ENCODE measurements at regions of chr3 and their contacts with region 1.

Region 1: GRCh38 chr3:129824926-129825541 is 68.5 kb downstream of the TMCC1 start:
- DNase-seq: peak in 3 of 6 donors; percentile 18 to 33 (median 28)
- ATAC-seq: peak in 3 of 4 donors; percentile 63 to 80 (median 76)
- H3K4me3 ChIP-seq: no peak overlapping the region
- H3K27ac ChIP-seq: no peak overlapping the region
- H3K4me1 ChIP-seq: no peaks in the 10 kb centered on the region
- H3K27me3 ChIP-seq: no peaks in the 10 kb centered on the region
- CTCF ChIP-seq: peak; percentile 34 to 57 (median 46)

Region 2: DNA sequence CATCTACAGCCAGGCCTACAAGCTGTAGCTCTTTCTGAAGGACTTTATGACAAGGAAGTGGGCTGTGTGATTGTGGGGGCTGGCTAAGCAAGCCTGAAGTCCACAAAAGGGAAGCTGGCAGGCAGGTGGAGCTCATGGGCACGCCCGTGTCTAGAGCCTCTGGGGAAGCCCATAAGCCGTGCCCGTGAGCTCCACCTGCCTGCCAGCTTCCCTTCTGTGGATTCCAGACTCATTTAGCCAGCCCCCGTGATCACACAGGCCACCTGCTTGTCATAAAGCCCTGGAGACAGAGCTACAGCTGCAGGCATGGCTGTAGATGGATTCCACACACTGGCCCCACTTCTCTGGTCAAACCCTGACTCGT is 808.7 kb before region 1 on chr3:
- intact Hi-C with region 1: no loop called
- DNase-seq: no peak
- ATAC-seq: peak in 3 of 4 donors; percentile 68 to 74 (median 73)
- H3K4me3 ChIP-seq: no peak overlapping the region
- H3K27ac ChIP-seq: no peak overlapping the region
- H3K4me1 ChIP-seq: no peaks in the 10 kb centered on the region
- H3K27me3 ChIP-seq: no peaks in the 10 kb centered on the region
- CTCF ChIP-seq: no peak

Region 3: DNA sequence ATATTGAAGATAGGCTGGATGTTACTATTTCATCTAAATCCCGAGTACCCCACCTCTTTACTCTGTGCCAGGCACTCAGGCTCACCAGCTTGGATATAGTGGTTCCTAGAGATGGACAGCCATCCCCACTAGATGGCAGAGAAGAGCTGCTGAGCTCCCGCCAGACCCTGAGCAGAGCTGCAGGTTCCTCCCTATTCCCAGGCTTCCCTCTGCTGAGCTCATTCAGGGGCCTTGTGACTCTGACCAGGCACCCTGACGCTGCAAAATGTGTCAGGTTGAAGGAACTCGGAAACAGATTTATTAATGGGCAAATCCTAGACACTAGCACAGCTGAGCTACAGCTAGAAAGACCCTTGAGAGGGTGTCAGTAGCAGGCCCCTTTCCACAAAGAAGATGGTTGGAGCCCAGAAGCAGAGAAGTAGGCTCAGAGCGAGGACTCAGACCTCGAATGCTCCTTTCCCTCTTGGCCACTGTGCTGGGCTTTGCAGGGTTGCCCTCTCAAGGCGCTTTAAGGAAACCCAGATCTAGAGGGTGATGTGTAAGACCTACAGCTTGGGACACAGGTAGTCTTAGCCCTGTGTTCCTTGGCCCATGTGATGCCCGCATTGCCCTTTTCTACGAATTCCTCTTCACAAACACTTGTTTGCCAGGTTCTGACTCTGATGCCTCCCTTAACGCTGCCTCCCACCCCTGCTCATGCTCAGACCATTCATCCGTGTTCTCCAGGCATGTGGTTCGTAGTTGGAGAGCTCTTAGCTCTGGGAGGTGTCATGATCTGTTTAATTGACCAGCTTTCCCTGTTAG is 334.6 kb before region 1 on chr3:
- intact Hi-C with region 1: loop called in 1 of 3 experiments (anchors 10 kb)
- DNase-seq: peak; percentile 70 to 84 (median 79)
- ATAC-seq: peak; percentile 90 to 97 (median 96)
- H3K4me3 ChIP-seq: no peak overlapping the region
- H3K27ac ChIP-seq: peak overlapping the region in 2 of 4 donors; percentile 29 to 51
- H3K4me1 ChIP-seq: no peaks in the 10 kb centered on the region
- H3K27me3 ChIP-seq: no peaks in the 10 kb centered on the region
- CTCF ChIP-seq: peak; percentile 36 to 86 (median 75)

Region 4: GRCh38 chr3:129633751-129634392 is 191.2 kb before region 1 on chr3:
- intact Hi-C with region 1: loop called in 1 of 3 experiments (anchors 5 kb)
- DNase-seq: no peak
- ATAC-seq: no peak
- H3K4me3 ChIP-seq: no peak overlapping the region
- H3K27ac ChIP-seq: no peak overlapping the region
- H3K4me1 ChIP-seq: no peaks in the 10 kb centered on the region
- H3K27me3 ChIP-seq: no peaks in the 10 kb centered on the region
- CTCF ChIP-seq: no peak

Region 5: DNA sequence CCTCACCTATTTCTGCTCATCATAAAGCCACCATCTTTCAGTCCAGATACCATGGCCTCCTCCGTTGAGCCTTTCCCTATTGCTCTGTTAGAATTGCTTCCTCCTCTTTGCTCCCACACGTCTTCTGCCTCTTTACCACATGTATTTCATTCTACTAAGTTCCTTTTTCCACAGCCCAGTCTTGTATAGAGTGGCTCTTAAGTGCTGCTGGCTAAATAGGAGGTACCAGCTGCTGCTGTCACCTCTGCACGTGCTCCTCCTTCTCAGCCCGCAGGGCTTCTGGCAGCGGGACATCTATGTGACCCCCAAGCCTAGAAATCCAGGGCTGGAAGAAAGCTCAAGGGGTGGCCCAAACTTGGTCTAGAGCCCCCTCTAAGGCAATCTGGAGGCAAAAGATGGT is 179.7 kb before region 1 on chr3:
- intact Hi-C with region 1: loop called in 2 of 3 experiments (anchors 5 to 10 kb)
- DNase-seq: no peak
- ATAC-seq: peak in 1 of 4 donors; percentile 33
- H3K4me3 ChIP-seq: no peak overlapping the region
- H3K27ac ChIP-seq: no peak overlapping the region
- H3K4me1 ChIP-seq: no peaks in the 10 kb centered on the region
- H3K27me3 ChIP-seq: no peaks in the 10 kb centered on the region
- CTCF ChIP-seq: no peak

Region 6: DNA sequence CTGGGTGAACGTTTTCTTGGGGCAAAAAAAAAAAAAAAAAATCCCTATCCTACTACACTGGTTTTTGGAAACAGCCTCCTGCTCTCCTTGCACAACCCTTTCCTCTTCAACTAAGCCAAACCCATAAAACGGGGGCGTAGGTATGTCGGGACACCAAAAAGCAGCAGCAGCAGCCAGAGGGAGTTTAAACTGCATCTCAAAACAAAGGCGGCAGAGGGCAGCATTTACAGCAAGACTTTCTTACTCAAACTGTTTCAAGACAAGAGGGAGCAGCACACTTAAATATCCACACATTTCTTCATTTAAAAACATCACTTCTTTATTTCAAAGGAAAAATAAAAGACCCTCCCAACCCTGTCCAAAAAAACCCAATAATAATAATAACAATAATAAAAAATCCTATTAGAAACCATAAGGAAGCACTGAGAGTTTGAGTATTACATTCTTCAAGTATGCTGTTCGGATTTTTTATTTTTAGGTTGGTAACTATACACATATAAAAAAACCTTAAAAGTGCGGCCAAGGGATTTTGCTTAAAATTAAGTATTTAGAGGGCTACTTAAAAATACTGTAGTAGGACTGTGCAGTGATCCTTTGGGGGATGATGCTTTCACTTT is 174.7 kb before region 1 on chr3:
- intact Hi-C with region 1: loop called in 2 of 3 experiments (anchors 5 to 10 kb)
- DNase-seq: peak in 3 of 6 donors; percentile 20 to 64 (median 34)
- ATAC-seq: peak in 3 of 4 donors; percentile 76 to 89 (median 82)
- H3K4me3 ChIP-seq: no peak overlapping the region
- H3K27ac ChIP-seq: no peak overlapping the region
- H3K4me1 ChIP-seq: no peaks in the 10 kb centered on the region
- H3K27me3 ChIP-seq: no peaks in the 10 kb centered on the region
- CTCF ChIP-seq: peak in 2 of 4 donors; percentile 34 to 35

Measured in pancreas (tissue), 10 donors.